ENCODE measurements at regions of chr1 and their contacts with region 1.

Region 1: DNA sequence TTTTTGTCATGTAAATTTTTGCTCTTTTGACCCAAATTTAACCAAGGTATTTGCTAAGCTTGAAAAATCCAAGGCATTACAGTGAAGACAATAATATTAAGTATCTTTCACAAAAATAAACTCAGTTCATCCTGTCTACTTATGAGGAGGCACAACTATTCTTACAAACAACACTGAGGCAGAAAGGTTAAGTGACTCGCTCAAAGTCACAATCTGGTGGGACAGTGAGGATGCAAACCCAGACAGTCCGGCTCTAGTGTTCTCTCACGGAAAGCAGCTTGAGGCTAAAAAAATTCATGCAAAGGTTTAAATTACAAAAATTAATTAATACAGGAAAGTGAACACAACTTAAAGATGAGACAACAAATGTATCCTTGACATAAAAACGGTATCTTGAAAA is 125.3 kb downstream of the SIPA1L2 start:
- DNase-seq: no peak
- ATAC-seq: no peak
- H3K4me3 ChIP-seq: no peak overlapping the region
- H3K4me3 Mint-ChIP-seq: no peak overlapping the region
- H3K27ac ChIP-seq: no peak overlapping the region
- H3K27ac Mint-ChIP-seq: no peak overlapping the region
- H3K4me1 ChIP-seq: no peaks in the 10 kb centered on the region
- H3K4me1 Mint-ChIP-seq: no peaks in the 10 kb centered on the region
- H3K27me3 ChIP-seq: no peaks in the 10 kb centered on the region
- H3K27me3 Mint-ChIP-seq: peaks cover 16% of the 10 kb centered on the region
- CTCF ChIP-seq: no peak

Region 2: GRCh38 chr1:232472485-232473041 is 32.1 kb before region 1 on chr1:
- CTCF ChIA-PET with region 1: no interaction called
- POLR2A ChIA-PET with region 1: no interaction called
- intact Hi-C with region 1: loop called (anchors 1 kb)
- DNase-seq: no peak
- ATAC-seq: no peak
- H3K4me3 ChIP-seq: no peak overlapping the region
- H3K4me3 Mint-ChIP-seq: no peak overlapping the region
- H3K27ac ChIP-seq: no peak overlapping the region
- H3K27ac Mint-ChIP-seq: no peak overlapping the region
- H3K4me1 ChIP-seq: no peaks in the 10 kb centered on the region
- H3K4me1 Mint-ChIP-seq: peaks cover 3% of the 10 kb centered on the region
- H3K27me3 ChIP-seq: no peaks in the 10 kb centered on the region
- H3K27me3 Mint-ChIP-seq: peaks cover 7% of the 10 kb centered on the region
- CTCF ChIP-seq: no peak